A549 (cell line): ENCODE measurements at regions of chr19 and their contacts with region 1.

Region 1: GRCh38 chr19:30395283-30395682 is 23.1 kb downstream of the ZNF536 start:
- DNase-seq: no peak
- ATAC-seq: no peak
- H3K4me3 ChIP-seq: no peak overlapping the region
- H3K27ac ChIP-seq: no peak overlapping the region
- H3K4me1 ChIP-seq: no peaks in the 10 kb centered on the region
- CTCF ChIP-seq: no peak
- EP300 ChIP-seq: no peak
- POLR2A ChIP-seq: no peak
- RAD21 ChIP-seq: no peak

Region 2: GRCh38 chr19:30406220-30407067 is 11.2 kb after region 1 on chr19:
- CTCF ChIA-PET with region 1: interaction called, 10 read pairs
- POLR2A ChIA-PET with region 1: no interaction called
- DNase-seq: peak; percentile 56 to 69
- ATAC-seq: peak; percentile 78 to 94; a peak in 5 of 6 replicates
- H3K4me3 ChIP-seq: no peak overlapping the region
- H3K27ac ChIP-seq: no peak overlapping the region
- H3K4me1 ChIP-seq: no peaks in the 10 kb centered on the region
- CTCF ChIP-seq: peak; percentile 38; the same call in 2 of the 3 replicates
- EP300 ChIP-seq: no peak
- POLR2A ChIP-seq: no peak
- RAD21 ChIP-seq: peak; percentile 57 to 71

Region 3: GRCh38 chr19:30457484-30457883 is 62.2 kb after region 1 on chr19:
- CTCF ChIA-PET with region 1: no interaction called
- POLR2A ChIA-PET with region 1: no interaction called
- DNase-seq: no peak
- ATAC-seq: peak in 1 of 2 experiments; percentile 20; a peak in 2 of 6 replicates
- H3K4me3 ChIP-seq: no peak overlapping the region
- H3K27ac ChIP-seq: no peak overlapping the region
- H3K4me1 ChIP-seq: no peaks in the 10 kb centered on the region
- CTCF ChIP-seq: no peak
- EP300 ChIP-seq: no peak
- POLR2A ChIP-seq: no peak
- RAD21 ChIP-seq: no peak